ENCODE measurements at regions of chrX and their contacts with region 1.

Region 1: DNA sequence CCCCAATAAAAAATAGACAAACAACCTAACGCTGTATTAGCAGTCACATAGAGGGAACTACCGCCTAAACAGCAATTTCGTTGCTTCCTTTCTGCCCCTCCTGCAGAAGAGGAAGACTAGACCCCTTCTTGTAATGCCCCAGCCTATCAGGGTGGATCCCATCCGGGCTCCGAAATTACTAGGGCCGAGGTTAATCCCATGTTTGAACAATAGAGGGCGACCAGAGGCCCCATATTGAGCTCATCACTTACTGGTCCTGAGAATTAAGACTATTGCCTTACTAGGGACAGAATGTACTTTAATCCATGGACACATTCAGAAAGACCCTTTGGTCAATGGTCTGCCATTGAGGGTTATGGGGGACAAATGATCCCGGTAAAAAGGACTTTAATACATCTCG is 11.8 kb upstream of the ZNF630 start:
- DNase-seq: peak; percentile 55
- H3K4me3 Mint-ChIP-seq: no peak overlapping the region
- H3K27ac Mint-ChIP-seq: no peak overlapping the region
- H3K4me1 Mint-ChIP-seq: no peaks in the 10 kb centered on the region
- H3K27me3 Mint-ChIP-seq: no peaks in the 10 kb centered on the region

Region 2: GRCh38 chrX:47918274-47918673 is 164.9 kb before region 1 on chrX:
- CTCF ChIA-PET with region 1: no interaction called
- POLR2A ChIA-PET with region 1: no interaction called
- intact Hi-C with region 1: no loop called
- DNase-seq: no peak
- H3K4me3 Mint-ChIP-seq: no peak overlapping the region
- H3K27ac Mint-ChIP-seq: no peak overlapping the region
- H3K4me1 Mint-ChIP-seq: no peaks in the 10 kb centered on the region
- H3K27me3 Mint-ChIP-seq: no peaks in the 10 kb centered on the region

Region 3: DNA sequence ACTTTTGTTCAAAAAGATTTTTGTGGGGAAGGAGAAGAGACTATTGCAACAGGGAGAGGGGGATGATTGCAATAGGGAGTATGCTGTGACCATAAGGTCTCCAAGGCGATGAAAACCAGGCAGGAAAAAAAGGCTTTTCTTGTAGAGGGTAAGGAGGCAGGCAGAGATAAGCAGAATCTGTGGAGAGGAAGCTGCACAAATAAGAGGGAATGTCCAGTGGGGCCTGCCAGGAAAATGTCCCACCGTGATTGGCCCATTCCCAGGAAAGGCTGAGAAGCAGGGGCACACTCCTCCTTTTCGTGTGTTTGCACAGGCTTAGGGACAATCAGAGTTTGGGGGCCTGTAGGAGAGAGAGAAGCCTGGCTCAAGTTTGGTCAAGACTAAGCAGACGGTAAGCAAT is 47.3 kb before region 1 on chrX:
- CTCF ChIA-PET with region 1: no interaction called
- POLR2A ChIA-PET with region 1: no interaction called
- intact Hi-C with region 1: no loop called
- DNase-seq: no peak
- H3K4me3 Mint-ChIP-seq: no peak overlapping the region
- H3K27ac Mint-ChIP-seq: no peak overlapping the region
- H3K4me1 Mint-ChIP-seq: no peaks in the 10 kb centered on the region
- H3K27me3 Mint-ChIP-seq: no peaks in the 10 kb centered on the region

Region 4: DNA sequence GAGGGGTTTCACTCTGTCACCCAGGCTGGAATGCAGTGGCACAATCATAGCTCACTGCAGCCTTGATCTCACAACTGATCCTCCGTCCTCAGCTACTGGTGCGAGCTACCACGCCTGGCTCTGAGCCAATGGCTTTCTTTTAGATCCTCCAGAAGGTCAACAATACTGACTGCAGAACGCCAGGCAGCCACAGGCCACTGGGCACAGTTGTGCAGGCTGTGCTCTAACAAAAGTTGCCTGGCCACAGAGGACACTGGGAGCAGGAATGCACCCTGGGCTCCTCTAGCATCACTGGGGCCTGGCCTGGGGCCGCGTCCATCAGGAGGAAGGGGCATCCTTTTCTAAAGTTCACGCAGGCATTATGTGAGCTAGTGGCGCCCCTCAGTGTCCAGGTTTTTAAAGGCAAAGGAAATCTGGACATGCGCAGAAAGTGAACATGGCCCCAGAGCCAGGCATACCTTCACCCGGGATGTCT is 410.7 kb after region 1 on chrX:
- CTCF ChIA-PET with region 1: interaction called, 4 read pairs
- POLR2A ChIA-PET with region 1: no interaction called
- intact Hi-C with region 1: loop called (anchors 5 kb)
- DNase-seq: peak; percentile 45
- H3K4me3 Mint-ChIP-seq: no peak overlapping the region
- H3K27ac Mint-ChIP-seq: no peak overlapping the region
- H3K4me1 Mint-ChIP-seq: peaks cover 1% of the 10 kb centered on the region
- H3K27me3 Mint-ChIP-seq: no peaks in the 10 kb centered on the region